Spleen (tissue), 13 donors: ENCODE measurements at regions of chr17 and their contacts with region 1.

Region 1: DNA sequence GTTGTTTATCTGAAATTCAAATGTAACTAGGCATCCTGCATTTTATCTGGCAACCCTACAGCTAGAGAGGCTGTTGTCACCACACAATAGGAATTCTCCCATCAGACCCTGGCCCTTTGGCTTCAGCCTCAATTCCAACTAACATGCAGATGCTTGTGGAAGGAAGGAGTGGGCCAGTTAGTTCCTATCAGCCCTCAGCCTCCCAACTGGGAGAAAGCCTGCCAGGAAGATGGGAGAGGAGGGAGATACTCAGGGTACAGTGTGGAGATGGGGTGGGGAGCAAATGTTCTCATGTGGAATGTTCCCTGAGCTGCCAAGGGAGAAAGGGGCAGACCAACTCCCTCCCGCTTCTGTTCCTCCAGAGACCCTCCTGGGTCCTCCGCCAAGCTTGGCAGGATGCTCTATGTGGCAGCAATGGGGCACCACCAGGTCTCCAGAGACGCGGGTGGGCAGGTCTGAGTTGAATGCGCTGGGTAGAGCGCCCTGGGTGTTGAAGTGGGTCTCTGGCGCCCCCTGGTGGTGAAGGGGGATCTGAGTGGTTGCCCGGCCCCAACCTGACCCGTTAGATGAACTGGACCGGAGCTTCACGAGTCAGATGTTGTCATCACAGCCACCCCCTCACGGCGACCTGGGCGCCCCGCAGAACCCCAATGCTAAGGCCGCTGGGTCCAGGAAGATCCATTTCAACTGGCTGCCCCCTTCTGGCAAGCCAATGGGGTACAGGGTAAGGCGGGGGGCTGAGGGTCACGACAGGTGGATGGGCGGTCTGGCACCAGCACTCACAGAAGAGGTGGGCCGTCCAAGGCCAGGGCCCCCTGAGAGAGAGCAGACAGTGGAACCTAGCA is 15.2 kb downstream of the GALK1 start:
- DNase-seq: peak; percentile 97
- H3K4me3 ChIP-seq: no peak overlapping the region
- H3K27ac ChIP-seq: peak overlapping the region in 5 of 8 donors; percentile 7 to 75 (median 23)
- H3K4me1 ChIP-seq: peaks cover 11 to 66% (median 50%) of the 10 kb centered on the region in 6 donors
- H3K27me3 ChIP-seq: no peaks in the 10 kb centered on the region
- CTCF ChIP-seq: peak; percentile 86 to 98 (median 94)
- POLR2A ChIP-seq: no peak

Region 2: GRCh38 chr17:75632863-75633485 is 116.8 kb before region 1 on chr17 and contains the start of gene SMIM5:
- intact Hi-C with region 1: loop called (anchors 2 kb)
- DNase-seq: peak; percentile 95
- H3K4me3 ChIP-seq: peak within 1 kb of the TSS in 2 of 8 donors; percentile 6 to 7
- H3K27ac ChIP-seq: peak within 1 kb of the TSS in 7 of 8 donors; percentile 14 to 73 (median 68)
- H3K4me1 ChIP-seq: peaks cover 14 to 24% (median 21%) of the 10 kb centered on the region in 6 donors
- H3K27me3 ChIP-seq: no peaks in the 10 kb centered on the region
- CTCF ChIP-seq: peak; percentile 76 to 99 (median 96)
- POLR2A ChIP-seq: no peak
- total RNA-seq, gene SMIM5: 2.1 to 5.1 (median 3.4) TPM

Region 3: DNA sequence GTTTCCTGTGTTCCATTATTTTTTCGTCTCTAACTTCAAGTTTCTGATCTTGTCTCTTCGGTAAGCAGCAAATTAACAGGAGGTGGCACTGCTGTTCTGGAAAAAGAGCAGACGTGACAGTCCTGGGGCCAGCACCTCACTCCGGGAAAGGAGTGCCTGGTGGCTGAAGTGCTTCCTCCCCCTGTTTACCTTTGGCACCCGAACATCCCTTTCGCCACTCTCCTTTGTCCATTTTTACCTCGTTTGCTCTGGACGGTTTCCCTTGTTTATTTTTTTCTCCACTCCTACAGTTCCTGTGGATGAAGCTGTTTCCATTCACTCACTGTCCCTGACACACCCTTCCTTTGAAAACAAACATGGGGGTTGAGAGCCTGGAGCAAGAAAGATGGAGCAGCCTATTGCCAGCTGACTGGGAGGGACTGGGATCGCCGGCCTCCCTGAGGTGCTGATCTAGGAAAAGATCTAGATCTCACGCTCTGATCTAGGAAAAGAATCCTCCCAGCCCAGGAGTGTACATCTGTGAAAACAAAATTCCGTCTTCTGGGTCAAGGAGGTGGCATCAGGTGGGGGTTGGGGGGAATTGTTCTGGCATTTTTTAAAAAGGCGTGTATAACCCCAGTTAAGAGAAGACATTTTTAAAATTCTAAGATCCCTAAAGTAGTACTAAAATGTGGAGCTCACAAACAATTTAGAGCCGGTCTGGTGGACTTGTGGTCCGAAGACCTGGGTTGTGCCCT is 69.9 kb before region 1 on chr17:
- intact Hi-C with region 1: loop called (anchors 2 kb)
- DNase-seq: peak; percentile 75
- H3K4me3 ChIP-seq: no peak overlapping the region
- H3K27ac ChIP-seq: peak overlapping the region in 7 of 8 donors; percentile 51 to 79 (median 71)
- H3K4me1 ChIP-seq: peaks cover 8 to 87% (median 49%) of the 10 kb centered on the region in 6 donors
- H3K27me3 ChIP-seq: no peaks in the 10 kb centered on the region
- CTCF ChIP-seq: peak in 8 of 11 experiments; percentile 12 to 69 (median 38)
- POLR2A ChIP-seq: no peak